ENCODE measurements at regions of chr17 and their contacts with region 1.

Region 1: DNA sequence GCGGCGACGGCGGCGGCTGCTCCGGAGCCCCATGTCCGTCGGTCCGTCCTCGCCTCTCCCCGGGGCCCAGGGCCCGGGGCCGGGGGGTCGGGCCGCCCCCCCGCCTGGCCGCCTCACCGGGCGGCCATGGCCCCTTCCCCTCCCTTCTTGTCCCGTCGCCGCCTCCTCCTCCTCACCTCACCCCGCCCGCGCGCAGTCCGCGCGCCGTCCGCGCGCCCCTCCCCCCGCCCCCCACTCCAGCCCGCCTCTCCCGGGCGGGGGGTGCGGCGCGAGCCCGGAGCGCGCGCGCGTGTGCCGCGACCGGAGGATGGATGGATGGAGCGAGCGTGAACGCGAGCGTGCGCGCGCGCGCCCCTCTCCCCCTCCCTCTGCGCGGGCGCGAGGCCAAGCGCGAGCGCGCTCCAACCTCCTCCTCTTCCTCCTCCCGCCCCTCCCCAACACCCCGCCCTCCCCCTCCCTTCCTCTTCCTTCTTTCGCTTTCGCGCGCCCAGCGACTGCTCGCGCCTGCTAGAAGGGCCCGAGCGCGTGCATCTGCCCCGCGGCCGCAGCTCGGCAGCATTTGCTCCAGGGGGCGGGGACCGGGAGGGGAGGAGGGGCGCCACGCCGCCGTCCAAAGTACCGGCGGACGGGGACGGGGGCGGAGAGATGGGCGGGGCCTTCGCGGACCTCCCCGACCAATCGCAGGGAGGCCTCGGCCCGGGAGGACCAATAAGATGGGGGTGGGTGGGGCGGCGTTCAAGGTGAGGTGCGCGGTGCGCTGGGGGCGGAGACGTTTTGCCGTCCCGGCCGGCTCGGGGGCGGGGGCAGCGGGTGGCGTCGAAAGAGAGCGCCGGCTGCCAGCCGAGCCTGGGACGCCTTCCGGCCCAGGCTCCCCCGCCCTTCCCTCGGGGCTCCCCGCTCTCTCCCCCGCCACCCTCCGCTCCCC is at the start of gene ATXN7L3:
- DNase-seq: peak; percentile 95
- ATAC-seq: peak; percentile 85
- H3K4me3 Mint-ChIP-seq: peak within 1 kb of the TSS; percentile 91
- H3K27ac Mint-ChIP-seq: peak within 1 kb of the TSS; percentile 92
- H3K4me1 Mint-ChIP-seq: peaks cover 39% of the 10 kb centered on the region
- H3K27me3 Mint-ChIP-seq: no peaks in the 10 kb centered on the region
- CTCF ChIP-seq: no peak
- total RNA-seq, gene ATXN7L3: 92.0 and 103 TPM in 2 replicates

Region 2: GRCh38 chr17:44141717-44142285 is 58.0 kb before region 1 on chr17 and contains the start of gene HROB:
- CTCF ChIA-PET with region 1: no interaction called
- POLR2A ChIA-PET with region 1: no interaction called
- intact Hi-C with region 1: loop called (anchors 1 kb)
- DNase-seq: peak; percentile 96
- ATAC-seq: peak; percentile 98
- H3K4me3 Mint-ChIP-seq: peak within 1 kb of the TSS; percentile 84
- H3K27ac Mint-ChIP-seq: peak within 1 kb of the TSS; percentile 70
- H3K4me1 Mint-ChIP-seq: peaks cover 15% of the 10 kb centered on the region
- H3K27me3 Mint-ChIP-seq: peaks cover 8% of the 10 kb centered on the region
- CTCF ChIP-seq: no peak
- total RNA-seq, gene HROB: 2.2 and 5.0 TPM in 2 replicates

Region 3: DNA sequence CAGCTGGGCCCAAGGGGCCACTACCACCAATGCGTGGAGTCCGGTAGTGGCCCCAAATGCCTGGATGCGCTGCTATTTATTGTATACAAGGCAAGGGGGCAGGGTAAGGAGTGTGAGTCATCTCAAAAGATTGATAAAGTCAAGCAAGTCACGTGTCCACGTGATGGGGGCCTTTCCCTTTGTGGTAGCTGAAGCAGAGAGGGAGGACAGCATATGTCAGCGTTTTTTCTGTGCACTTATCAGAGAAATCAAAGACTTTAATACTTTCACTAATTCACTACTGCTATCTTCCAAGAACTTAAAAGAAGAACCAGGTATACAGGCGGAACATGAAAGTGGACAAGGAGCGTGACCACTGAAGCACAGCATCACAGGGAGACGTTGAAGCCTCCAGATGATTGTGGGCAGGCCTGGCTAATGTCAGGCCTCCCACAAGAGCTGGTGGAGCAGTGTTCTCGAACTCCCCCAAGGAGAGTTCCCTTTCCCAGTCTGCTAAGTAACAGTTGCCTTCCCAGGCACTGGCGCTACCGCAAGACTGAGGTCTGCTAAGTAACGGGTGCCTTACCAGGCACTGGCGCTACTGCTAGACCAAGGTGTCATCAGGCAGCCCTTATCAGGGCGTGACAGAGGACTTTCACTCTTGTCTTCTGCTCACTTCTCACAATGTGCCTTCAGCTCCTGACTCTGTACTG is 40.1 kb before region 1 on chr17:
- CTCF ChIA-PET with region 1: no interaction called
- POLR2A ChIA-PET with region 1: no interaction called
- intact Hi-C with region 1: no loop called
- DNase-seq: no peak
- ATAC-seq: no peak
- H3K4me3 Mint-ChIP-seq: no peak overlapping the region
- H3K27ac Mint-ChIP-seq: no peak overlapping the region
- H3K4me1 Mint-ChIP-seq: no peaks in the 10 kb centered on the region
- H3K27me3 Mint-ChIP-seq: no peaks in the 10 kb centered on the region
- CTCF ChIP-seq: no peak

Region 4: GRCh38 chr17:44210342-44211192 is 10.8 kb after region 1 on chr17:
- CTCF ChIA-PET with region 1: interaction called, 11 read pairs
- POLR2A ChIA-PET with region 1: interaction called, 130 read pairs
- intact Hi-C with region 1: loop called (anchors 1 kb)
- DNase-seq: peak; percentile 93
- ATAC-seq: peak; percentile 98
- H3K4me3 Mint-ChIP-seq: peak overlapping the region; percentile 52
- H3K27ac Mint-ChIP-seq: peak overlapping the region; percentile 74
- H3K4me1 Mint-ChIP-seq: peaks cover 55% of the 10 kb centered on the region
- H3K27me3 Mint-ChIP-seq: no peaks in the 10 kb centered on the region
- CTCF ChIP-seq: peak; percentile 73

Region 5: DNA sequence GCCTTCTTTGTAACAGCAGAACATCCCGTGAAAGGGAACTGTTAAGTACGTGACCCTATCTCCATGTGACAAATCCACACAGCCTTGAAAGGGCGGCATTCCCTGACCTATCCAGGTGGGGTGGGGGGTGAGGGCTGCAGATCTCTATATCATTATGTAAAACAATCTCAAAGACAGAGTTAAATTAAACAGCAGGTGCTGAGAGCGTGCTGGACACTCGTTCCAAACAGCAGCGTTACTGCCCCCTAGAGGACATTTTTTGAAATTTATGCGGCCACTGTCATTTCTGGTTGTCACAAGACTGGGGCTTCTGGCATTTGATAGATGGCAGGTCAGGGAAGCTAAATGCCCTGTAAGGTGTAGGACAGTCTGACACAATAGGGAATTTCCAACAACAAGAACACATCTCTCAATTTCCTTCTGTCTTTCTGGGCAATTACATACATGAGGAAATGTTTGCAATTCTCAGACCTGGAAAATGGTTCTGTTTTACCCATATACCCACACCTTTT is 131.5 kb after region 1 on chr17:
- CTCF ChIA-PET with region 1: interaction called, 4 read pairs
- POLR2A ChIA-PET with region 1: interaction called, 14 read pairs
- intact Hi-C with region 1: loop called (anchors 1 kb)
- DNase-seq: no peak
- ATAC-seq: peak; percentile 32
- H3K4me3 Mint-ChIP-seq: no peak overlapping the region
- H3K27ac Mint-ChIP-seq: no peak overlapping the region
- H3K4me1 Mint-ChIP-seq: peaks cover 34% of the 10 kb centered on the region
- H3K27me3 Mint-ChIP-seq: no peaks in the 10 kb centered on the region
- CTCF ChIP-seq: peak; percentile 88

Region 6: GRCh38 chr17:44503147-44504029 is 303.6 kb after region 1 on chr17 and contains the start of gene GPATCH8:
- CTCF ChIA-PET with region 1: no interaction called
- POLR2A ChIA-PET with region 1: interaction called, 5 read pairs
- intact Hi-C with region 1: loop called (anchors 2 kb)
- DNase-seq: peak; percentile 96
- ATAC-seq: peak; percentile 90
- H3K4me3 Mint-ChIP-seq: peak within 1 kb of the TSS; percentile 98
- H3K27ac Mint-ChIP-seq: peak within 1 kb of the TSS; percentile 95
- H3K4me1 Mint-ChIP-seq: peaks cover 38% of the 10 kb centered on the region
- H3K27me3 Mint-ChIP-seq: peaks cover 7% of the 10 kb centered on the region
- CTCF ChIP-seq: no peak
- total RNA-seq, gene GPATCH8: 62.2 and 64.5 TPM in 2 replicates